ENCODE measurements at regions of chr17 and their contacts with region 1.

Region 1: DNA sequence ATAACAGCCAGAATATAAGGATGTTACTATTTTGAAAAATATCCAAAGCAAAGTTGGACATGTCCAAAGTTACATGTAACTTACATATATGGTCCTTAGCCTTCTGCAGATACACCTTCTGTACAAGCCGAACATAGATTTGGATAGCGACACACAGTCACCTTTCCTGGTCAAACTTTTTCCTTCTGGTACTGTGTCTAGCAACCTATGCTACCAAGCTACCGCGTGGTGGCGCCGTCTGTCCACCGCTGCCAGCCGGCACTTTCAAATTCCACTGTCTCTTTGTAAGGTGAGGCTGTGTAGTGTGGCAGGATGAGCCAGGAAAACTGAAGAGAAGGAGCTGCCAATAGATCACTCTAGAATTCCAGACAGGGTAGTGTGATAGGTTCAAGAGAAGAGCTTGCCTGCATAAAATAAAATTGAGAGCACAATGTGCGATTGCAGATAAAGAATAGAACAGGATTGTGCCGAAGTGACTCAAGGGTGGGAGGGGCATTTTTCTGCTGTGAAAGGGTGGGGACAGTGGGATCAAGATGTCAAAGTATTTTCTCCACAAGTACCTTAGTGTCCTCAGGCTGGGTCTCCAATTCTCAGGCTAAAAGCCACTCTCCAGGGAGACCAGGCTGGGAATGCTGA is 366.9 kb downstream of the SLC39A11 start:
- DNase-seq: peak; percentile 78
- H3K4me3 ChIP-seq: no peak overlapping the region
- H3K27ac ChIP-seq: no peak overlapping the region
- H3K4me1 ChIP-seq: no peaks in the 10 kb centered on the region
- H3K27me3 ChIP-seq: no peaks in the 10 kb centered on the region
- CTCF ChIP-seq: peak; percentile 100
- EP300 ChIP-seq: no peak
- RAD21 ChIP-seq: peak; percentile 99

Region 2: DNA sequence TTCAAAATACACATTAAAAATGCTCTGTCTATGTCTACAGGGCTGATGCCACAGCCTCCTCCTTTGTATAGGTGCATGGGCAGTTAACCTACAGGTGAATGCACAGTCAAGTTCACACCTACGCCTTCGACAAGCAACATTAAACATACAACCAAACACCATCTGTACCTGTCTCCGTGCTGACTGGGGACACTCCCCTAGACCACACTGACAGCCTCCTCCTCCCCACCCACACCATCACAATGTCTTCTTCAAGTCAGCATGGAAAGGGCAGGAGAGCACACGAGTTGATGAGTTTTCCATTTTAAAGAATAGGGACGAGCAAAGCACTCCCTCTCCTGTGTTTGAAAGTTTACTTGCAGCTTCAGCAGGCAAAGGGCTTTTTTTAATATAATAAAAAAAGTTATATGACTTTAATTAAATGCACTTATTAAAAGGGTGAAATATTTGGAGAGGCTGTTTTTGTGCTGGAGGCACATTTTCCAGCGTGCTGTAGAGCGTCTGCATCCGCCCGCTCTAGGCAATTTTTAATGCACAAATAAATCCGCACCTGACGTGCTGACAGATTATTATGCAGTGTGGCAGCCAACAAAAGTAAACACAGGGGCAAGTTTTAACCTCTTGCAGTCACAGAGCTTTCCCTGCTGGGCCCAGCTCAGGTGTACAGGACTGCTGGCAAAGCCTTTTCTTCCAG is 236.9 kb before region 1 on chr17:
- CTCF ChIA-PET with region 1: no interaction called
- POLR2A ChIA-PET with region 1: no interaction called
- DNase-seq: no peak
- H3K4me3 ChIP-seq: no peak overlapping the region
- H3K27ac ChIP-seq: no peak overlapping the region
- H3K4me1 ChIP-seq: no peaks in the 10 kb centered on the region; a peak in 1 of 4 replicates
- H3K27me3 ChIP-seq: no peaks in the 10 kb centered on the region
- CTCF ChIP-seq: no peak
- EP300 ChIP-seq: no peak
- RAD21 ChIP-seq: no peak

Region 3: GRCh38 chr17:72538901-72539352 is 186.6 kb before region 1 on chr17:
- CTCF ChIA-PET with region 1: no interaction called
- POLR2A ChIA-PET with region 1: no interaction called
- DNase-seq: no peak
- H3K4me3 ChIP-seq: no peak overlapping the region
- H3K27ac ChIP-seq: no peak overlapping the region
- H3K4me1 ChIP-seq: peaks cover 9 to 14% of the 10 kb centered on the region in 2 experiments
- H3K27me3 ChIP-seq: no peaks in the 10 kb centered on the region
- CTCF ChIP-seq: no peak
- EP300 ChIP-seq: no peak
- RAD21 ChIP-seq: no peak

Region 4: GRCh38 chr17:72562615-72563188 is 162.8 kb before region 1 on chr17:
- CTCF ChIA-PET with region 1: interaction called, 317 read pairs
- POLR2A ChIA-PET with region 1: no interaction called
- DNase-seq: no peak
- H3K4me3 ChIP-seq: no peak overlapping the region
- H3K27ac ChIP-seq: no peak overlapping the region
- H3K4me1 ChIP-seq: peaks cover 0 to 5% of the 10 kb centered on the region in 2 experiments; a peak in 1 of 4 replicates
- H3K27me3 ChIP-seq: no peaks in the 10 kb centered on the region
- CTCF ChIP-seq: no peak
- EP300 ChIP-seq: no peak
- RAD21 ChIP-seq: no peak

Region 5: DNA sequence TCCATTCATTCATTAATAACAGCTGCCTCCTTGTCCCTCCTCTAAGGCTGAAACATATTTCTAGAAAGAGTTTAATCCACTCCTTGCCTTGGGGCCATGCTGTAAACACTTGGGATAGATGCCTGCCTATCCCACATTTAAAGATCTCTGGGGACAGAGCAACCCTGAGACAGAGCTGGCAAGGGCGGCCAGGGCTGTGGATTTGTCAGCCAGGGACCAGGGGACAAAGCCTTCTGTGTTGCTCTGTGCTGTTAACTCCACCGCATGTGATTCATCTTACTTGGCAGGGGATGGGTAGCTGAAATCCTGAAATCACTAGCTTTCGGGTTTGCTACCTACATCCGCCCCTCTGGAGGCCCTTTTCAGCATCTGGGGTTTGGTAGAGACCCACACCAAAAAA is 26.0 kb before region 1 on chr17:
- CTCF ChIA-PET with region 1: interaction called, 39 read pairs
- POLR2A ChIA-PET with region 1: no interaction called
- DNase-seq: no peak
- H3K4me3 ChIP-seq: no peak overlapping the region
- H3K27ac ChIP-seq: peak overlapping the region in 1 of 2 experiments; percentile 60; a peak in 2 of 4 replicates
- H3K4me1 ChIP-seq: peaks cover 19 to 29% of the 10 kb centered on the region in 2 experiments
- H3K27me3 ChIP-seq: no peaks in the 10 kb centered on the region
- CTCF ChIP-seq: no peak
- EP300 ChIP-seq: no peak
- RAD21 ChIP-seq: no peak

Region 6: DNA sequence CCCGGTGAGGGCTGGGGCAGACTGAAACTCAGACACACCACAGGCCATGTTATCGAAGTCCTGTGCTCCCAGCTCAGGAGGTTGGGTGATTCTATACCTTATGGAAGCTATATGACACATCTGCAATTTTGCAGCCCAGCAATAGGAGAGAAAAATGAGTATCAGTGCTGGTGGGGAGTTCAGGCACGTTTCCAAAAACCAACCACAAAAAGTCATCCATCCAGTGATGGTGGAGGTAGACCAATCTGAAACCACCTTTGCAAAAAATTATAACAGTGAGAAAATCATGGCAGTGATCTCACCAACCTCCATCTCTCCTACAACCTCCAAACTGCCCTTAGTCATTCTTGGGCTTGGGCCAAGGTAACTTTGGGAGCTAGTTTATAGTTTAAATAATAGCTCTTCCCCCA is 39.1 kb after region 1 on chr17:
- CTCF ChIA-PET with region 1: interaction called, 21 read pairs
- POLR2A ChIA-PET with region 1: no interaction called
- DNase-seq: no peak
- H3K4me3 ChIP-seq: no peak overlapping the region
- H3K27ac ChIP-seq: no peak overlapping the region
- H3K4me1 ChIP-seq: peaks cover 0 to 12% of the 10 kb centered on the region in 2 experiments; a peak in 2 of 4 replicates
- H3K27me3 ChIP-seq: no peaks in the 10 kb centered on the region
- CTCF ChIP-seq: no peak
- EP300 ChIP-seq: no peak
- RAD21 ChIP-seq: no peak

Region 7: GRCh38 chr17:72863526-72864211 is 138.1 kb after region 1 on chr17:
- CTCF ChIA-PET with region 1: no interaction called
- POLR2A ChIA-PET with region 1: no interaction called
- DNase-seq: no peak
- H3K4me3 ChIP-seq: no peak overlapping the region
- H3K27ac ChIP-seq: no peak overlapping the region
- H3K4me1 ChIP-seq: no peaks in the 10 kb centered on the region; a peak in 1 of 4 replicates
- H3K27me3 ChIP-seq: no peaks in the 10 kb centered on the region
- CTCF ChIP-seq: no peak
- EP300 ChIP-seq: no peak
- RAD21 ChIP-seq: no peak

Region 8: GRCh38 chr17:72985881-72986720 is 260.6 kb after region 1 on chr17:
- CTCF ChIA-PET with region 1: interaction called, 114 read pairs
- POLR2A ChIA-PET with region 1: interaction called, 3 read pairs
- DNase-seq: peak; percentile 85
- H3K4me3 ChIP-seq: no peak overlapping the region; a peak in 1 of 4 replicates
- H3K27ac ChIP-seq: no peak overlapping the region
- H3K4me1 ChIP-seq: peaks cover 5 to 12% of the 10 kb centered on the region in 2 experiments; a peak in 2 of 4 replicates
- H3K27me3 ChIP-seq: no peaks in the 10 kb centered on the region
- CTCF ChIP-seq: peak; percentile 97
- EP300 ChIP-seq: no peak
- RAD21 ChIP-seq: peak; percentile 96

Region 9: DNA sequence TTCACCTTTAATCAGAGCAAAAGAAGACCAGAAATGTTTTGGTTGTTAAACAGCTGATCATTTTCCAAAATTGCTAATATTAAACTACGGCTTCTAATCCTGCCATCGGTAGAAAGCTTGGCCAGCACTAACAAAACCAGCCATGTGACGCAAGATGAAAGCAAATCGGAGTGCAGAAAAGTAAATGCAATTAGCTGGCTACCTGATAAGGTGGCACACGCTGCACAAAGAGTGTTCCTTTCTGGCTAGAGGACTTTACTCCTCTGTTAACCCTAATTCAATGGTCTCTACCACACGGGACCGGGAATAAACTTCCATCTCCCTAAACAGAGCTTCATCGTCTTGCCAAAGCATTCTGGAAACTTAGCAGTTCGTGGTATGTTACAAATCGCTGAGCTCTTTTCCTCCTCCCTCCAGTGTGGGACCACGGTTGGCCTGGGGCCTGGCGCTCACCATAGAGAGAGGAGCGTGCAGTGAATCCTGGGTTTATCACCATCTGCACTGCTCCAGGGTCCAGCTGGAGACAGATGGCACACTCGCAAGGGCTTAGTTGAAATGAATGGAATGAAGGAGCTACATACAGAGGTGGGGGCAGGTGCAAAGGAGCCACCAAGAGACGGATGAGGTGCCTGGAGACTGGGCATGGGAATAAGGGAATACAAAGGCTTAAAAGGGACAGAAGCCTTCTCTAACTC is 457.2 kb after region 1 on chr17:
- CTCF ChIA-PET with region 1: interaction called, 501 read pairs
- POLR2A ChIA-PET with region 1: no interaction called
- DNase-seq: peak; percentile 62
- H3K4me3 ChIP-seq: no peak overlapping the region
- H3K27ac ChIP-seq: 0 out of 4 replicates have a peak overlapping the region, but pooled peaks of 1 of the 2 experiments have one; percentile 8
- H3K4me1 ChIP-seq: peaks cover 0 to 6% of the 10 kb centered on the region in 2 experiments; a peak in 1 of 4 replicates
- H3K27me3 ChIP-seq: no peaks in the 10 kb centered on the region
- CTCF ChIP-seq: no peak
- EP300 ChIP-seq: no peak; a peak in 1 of 4 replicates
- RAD21 ChIP-seq: no peak

Region 10: DNA sequence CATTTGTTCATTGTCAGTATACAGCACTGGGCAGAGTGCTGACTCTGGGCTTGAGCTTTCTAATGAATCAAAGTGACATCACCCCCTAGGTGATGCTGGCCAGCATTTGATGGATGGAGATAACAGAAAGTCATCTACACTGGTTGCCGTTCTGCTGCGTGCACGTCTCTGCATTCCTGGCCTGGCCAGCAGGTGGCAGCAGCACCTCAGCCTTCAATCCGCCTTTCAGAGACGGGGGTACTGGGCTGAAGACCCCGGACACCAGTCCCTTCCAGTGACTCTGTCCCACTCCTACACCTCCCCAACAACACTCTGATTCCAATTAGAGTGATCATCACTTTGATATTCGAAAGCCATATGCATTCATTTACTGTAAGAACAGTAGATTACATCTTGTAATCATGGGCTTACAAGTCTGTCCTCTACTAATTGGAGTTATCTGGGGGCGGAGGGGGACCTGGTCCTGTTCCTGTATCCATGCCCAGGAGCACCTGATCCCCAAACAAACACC is 530.2 kb after region 1 on chr17:
- CTCF ChIA-PET with region 1: interaction called, 69 read pairs
- POLR2A ChIA-PET with region 1: no interaction called
- DNase-seq: peak; percentile 91
- H3K4me3 ChIP-seq: no peak overlapping the region
- H3K27ac ChIP-seq: peak overlapping the region in 1 of 2 experiments; percentile 47; a peak in 2 of 4 replicates
- H3K4me1 ChIP-seq: peaks cover 0 to 14% of the 10 kb centered on the region in 2 experiments; a peak in 1 of 4 replicates
- H3K27me3 ChIP-seq: no peaks in the 10 kb centered on the region
- CTCF ChIP-seq: peak; percentile 100
- EP300 ChIP-seq: peak in 1 of 2 experiments; percentile 94; a peak in 2 of 4 replicates
- RAD21 ChIP-seq: peak; percentile 100

Measured in SK-N-SH (cell line).